ENCODE measurements at regions of chr1 and their contacts with region 1.

Region 1: DNA sequence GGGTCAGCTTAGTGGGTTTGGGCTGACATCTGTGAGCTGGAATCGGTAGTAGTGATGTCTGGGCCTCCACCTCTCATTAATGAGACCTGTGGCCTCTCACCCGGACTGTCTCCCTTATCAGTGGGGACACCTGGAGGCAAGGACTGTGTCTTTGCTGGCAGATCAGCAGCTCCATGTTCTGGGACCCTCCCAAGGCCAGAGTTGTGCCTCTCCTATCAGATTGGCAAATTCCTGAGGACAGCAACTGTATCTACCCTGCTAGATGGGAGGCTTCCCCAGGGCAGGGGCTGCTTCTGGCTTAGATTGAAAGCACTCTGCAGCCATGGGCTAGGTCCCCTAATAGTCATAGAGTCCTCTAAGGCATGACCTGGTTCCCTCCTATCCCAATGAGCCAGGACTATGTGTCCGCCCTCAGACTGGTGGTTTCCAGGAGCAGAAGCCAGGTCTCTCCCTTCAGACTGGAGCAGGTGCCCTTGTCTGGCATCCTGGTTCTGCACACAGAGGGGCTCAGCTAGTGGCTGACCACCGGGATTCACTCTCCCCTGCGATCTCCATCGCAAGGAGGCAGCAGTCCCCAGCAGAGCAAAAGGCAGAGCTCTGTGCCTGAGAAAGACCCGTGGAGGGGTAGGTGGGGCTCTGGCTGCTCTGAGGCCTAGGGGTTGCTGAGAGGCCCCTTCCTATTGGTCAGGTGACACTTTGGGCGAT is 5.8 kb downstream of the DRAXIN start:
- DNase-seq: no peak
- H3K4me3 ChIP-seq: no peak overlapping the region
- H3K27ac ChIP-seq: no peak overlapping the region
- H3K4me1 ChIP-seq: peaks cover 0 to 19% (median 15%) of the 10 kb centered on the region in 4 experiments
- H3K27me3 ChIP-seq: peaks cover 0 to 56% (median 37%) of the 10 kb centered on the region in 5 experiments

Region 2: DNA sequence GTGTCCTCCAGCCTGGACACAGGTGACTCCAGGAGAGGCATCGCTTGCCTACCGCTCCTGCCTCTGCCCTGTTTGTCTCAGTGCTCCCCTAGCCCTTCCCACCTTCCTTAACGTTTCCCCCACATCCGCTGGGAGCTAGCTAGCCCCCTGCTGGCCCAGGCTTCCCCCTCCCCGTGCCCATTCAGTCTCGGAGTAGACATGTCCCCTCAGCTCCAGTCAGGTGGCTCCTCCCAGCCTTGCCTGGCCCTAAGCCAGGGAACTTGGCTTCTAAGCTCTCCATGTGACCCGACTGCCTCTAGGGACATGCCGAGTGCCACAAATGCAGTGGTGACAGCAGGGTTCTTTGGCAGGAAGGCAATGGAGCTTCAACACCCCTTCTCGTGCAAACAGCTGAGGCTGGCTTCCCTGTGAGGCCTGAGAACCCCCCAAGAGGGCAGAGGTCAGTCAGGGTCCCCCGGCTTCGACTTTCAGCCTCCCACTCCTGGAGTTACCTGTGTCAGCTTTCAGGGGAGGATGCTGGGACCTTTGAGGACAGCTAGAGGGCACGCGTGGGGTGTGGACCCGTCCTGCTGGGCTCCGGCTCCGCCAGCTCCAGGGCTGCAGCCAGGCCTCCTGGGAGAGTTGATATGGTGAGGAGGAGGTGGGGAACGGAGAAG is 10.4 kb after region 1 on chr1:
- CTCF ChIA-PET with region 1: interaction called, 12 read pairs
- POLR2A ChIA-PET with region 1: no interaction called
- DNase-seq: peak; percentile 35 to 70 (median 70)
- H3K4me3 ChIP-seq: no peak overlapping the region
- H3K27ac ChIP-seq: no peak overlapping the region
- H3K4me1 ChIP-seq: peaks cover 0 to 4% (median 1%) of the 10 kb centered on the region in 4 experiments
- H3K27me3 ChIP-seq: peaks cover 0 to 24% (median 20%) of the 10 kb centered on the region in 5 experiments